Dendritic cell treated with granulocyte-macrophage colony-stimulating factor and Interleukin-4, amounts not matched to agents 40 ng/mL and 50 ng/mL, for 4 days (primary cell): ENCODE measurements at regions of chr20 and their contacts with region 1.

Region 1: DNA sequence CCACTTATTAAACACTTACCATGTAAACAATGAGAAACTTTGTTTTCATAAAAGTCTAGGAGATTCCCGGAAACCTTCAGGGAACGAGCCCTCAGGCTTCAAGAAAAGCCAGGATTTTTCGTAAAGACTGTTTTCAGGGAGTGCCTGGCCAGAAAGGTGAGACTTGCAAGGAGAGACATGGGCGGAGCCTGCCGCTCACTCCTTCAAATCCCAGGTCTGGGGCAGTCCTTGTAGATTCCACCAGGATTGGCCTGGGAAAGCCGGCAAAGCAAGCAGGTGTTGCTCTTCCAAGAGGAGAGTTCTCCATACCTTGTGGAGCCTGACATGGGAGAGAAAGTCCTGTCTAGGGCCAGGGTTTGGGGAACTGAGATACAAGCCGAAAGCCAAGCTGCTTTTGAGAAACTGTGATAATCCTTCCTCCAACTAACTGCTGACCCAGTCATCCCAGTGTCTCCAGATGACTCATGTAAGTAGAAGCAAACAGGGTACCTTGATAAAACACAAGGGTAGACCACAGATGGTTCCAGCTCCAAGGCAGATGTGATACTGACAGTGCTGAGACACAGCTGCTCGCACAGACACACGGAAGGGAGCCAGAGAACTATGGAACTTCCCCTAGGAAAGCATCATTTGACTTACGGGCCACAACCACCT is 69.4 kb upstream of the NAA20 start:
- H3K4me3 Mint-ChIP-seq: no peak overlapping the region
- H3K27ac Mint-ChIP-seq: peak overlapping the region; percentile 66
- H3K4me1 Mint-ChIP-seq: peaks cover 51% of the 10 kb centered on the region
- H3K27me3 Mint-ChIP-seq: no peaks in the 10 kb centered on the region

Region 2: GRCh38 chr20:19913927-19914614 is 33.7 kb before region 1 on chr20:
- intact Hi-C with region 1: loop called (anchors 5 kb)
- H3K4me3 Mint-ChIP-seq: no peak overlapping the region
- H3K27ac Mint-ChIP-seq: peak overlapping the region; percentile 98
- H3K4me1 Mint-ChIP-seq: peaks cover 84% of the 10 kb centered on the region
- H3K27me3 Mint-ChIP-seq: no peaks in the 10 kb centered on the region

Region 3: DNA sequence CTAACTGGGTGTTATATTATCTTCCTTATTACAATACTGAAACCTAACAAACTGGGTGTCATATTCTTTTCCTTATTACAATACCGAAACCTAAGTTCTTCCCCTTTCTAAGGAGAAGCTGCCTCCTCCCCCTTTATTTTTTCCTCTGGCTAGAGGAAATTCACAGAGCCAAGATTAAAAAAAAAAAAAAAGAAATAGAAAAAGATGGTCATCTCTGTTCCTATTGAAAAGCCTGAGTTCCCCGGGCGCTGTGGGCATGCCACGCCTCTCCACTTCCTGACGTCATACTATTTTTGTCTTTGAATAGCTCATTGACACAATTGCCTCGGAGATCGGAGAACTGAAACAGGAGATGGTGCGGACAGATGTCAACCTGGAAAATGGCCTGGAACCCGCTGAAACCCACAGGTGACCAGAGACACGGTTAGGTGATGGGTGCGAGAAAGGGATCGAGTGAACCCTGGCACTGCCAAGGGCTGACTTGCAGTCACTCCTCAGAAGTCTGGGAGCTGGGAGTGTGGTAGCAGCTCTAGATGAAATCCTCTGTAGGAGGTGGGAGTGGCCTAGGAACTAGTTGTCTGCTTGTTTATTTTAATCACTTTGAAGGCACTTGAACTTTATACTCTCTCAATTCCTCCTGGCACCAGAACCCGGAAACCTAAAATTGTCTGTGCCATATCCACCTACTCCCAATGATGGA is 12.8 kb before region 1 on chr20:
- intact Hi-C with region 1: loop called (anchors 1 kb)
- H3K4me3 Mint-ChIP-seq: peak overlapping the region; percentile 73
- H3K27ac Mint-ChIP-seq: peak overlapping the region; percentile 96
- H3K4me1 Mint-ChIP-seq: peaks cover 91% of the 10 kb centered on the region
- H3K27me3 Mint-ChIP-seq: no peaks in the 10 kb centered on the region

Region 4: GRCh38 chr20:19966840-19967239 is 19.1 kb after region 1 on chr20:
- intact Hi-C with region 1: loop called (anchors 2 kb)
- H3K4me3 Mint-ChIP-seq: no peak overlapping the region
- H3K27ac Mint-ChIP-seq: no peak overlapping the region
- H3K4me1 Mint-ChIP-seq: peaks cover 44% of the 10 kb centered on the region
- H3K27me3 Mint-ChIP-seq: no peaks in the 10 kb centered on the region

Region 5: GRCh38 chr20:19974626-19975435 is 27.1 kb after region 1 on chr20:
- intact Hi-C with region 1: loop called (anchors 5 kb)
- H3K4me3 Mint-ChIP-seq: peak overlapping the region; percentile 87
- H3K27ac Mint-ChIP-seq: peak overlapping the region; percentile 90
- H3K4me1 Mint-ChIP-seq: peaks cover 88% of the 10 kb centered on the region
- H3K27me3 Mint-ChIP-seq: no peaks in the 10 kb centered on the region